HepG2 (cell line): ENCODE measurements at regions of chr20 and their contacts with region 1.

Region 1: DNA sequence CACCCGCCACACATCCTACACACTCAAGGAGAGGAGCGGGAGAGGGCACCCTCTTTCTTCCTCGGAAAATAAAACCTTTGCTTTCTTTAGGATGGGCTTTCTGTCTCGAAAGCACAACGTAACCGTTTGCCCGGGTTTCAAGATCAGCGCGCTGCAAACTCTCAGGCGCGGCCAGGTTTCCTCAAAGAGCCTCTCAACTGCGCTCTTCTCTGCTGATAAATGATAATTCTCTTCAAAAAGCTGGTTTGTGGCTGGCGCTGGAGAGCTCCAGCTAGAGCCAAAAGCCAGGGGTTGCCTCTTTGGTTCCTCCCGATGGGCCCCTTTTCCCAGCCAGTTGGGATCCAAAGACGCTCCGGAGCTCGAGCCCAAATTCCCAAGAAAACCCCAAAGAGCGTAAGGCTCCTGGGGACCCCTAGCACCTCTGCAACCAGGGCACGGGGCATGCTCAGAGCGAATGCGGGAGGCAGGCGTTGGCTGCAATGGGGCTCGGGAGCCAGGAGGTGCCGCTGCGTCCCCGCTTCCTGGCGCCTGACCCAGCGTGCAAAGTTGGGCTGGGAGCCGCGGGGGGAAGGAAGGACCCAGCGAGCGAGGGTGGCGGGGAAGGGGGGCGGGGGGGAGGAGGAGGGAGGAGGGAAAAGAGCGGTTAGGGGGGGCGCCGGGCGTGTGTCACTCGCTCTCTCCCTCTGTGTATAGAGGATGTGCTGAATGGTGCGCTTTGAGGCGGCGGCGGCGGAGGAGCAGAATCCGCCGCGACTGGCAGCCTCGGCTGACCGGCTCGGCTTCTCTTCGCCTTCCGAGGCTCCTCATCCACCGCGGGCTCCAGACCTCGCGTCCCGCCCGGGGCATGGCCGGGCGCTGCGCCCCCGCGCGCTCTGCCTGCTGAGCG is at the start of gene PLCB1:
- DNase-seq: peak; percentile 86
- ATAC-seq: peak; percentile 96
- H3K4me3 ChIP-seq: peak within 1 kb of the TSS; percentile 76 to 87 (median 84)
- H3K27ac ChIP-seq: peak within 1 kb of the TSS; percentile 38
- H3K4me1 ChIP-seq: peaks cover 72% of the 10 kb centered on the region
- H3K27me3 ChIP-seq: no peaks in the 10 kb centered on the region; a peak in 1 of 5 replicates
- CTCF ChIP-seq: peak; percentile 97
- EP300 ChIP-seq: 0 out of 4 replicates have a peak, but pooled peaks have one; percentile 8 to 13
- POLR2A ChIP-seq: 0 out of 4 replicates have a peak, but pooled peaks have one; percentile 31 to 40
- RAD21 ChIP-seq: peak; percentile 98
- total RNA-seq, gene PLCB1: 42.4 and 68.9 TPM in 2 replicates

Region 2: DNA sequence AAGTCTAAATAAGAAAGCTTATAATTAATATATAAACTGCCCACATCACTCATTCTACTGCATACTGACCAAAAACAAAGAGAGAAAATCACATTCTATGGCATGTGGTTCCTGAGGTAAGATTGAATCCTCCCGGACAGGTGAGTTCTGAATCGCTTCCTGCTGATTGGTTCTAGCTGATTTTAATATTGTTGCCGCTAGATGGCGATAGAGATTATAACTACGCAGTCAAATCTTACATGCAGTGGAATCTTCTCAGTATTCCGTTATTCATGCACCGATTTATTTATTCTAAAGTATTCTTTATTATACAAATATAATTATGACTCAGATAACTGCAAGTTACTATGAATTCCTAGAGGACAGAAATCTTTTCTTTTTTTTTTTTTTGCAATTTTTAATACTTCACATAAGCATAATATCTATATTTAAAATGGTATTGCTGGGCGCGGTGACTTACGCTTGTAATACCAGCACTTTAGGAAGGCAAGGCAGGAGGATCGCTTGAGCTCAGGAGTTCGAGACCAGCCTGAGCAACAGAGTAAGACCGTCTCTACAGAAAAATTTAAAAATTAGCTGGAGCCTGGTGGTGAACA is 88.1 kb before region 1 on chr20:
- CTCF ChIA-PET with region 1: no interaction called
- POLR2A ChIA-PET with region 1: no interaction called
- in situ Hi-C with region 1: no loop called
- intact Hi-C with region 1: loop called (anchors 5 kb)
- DNase-seq: peak; percentile 81
- ATAC-seq: peak; percentile 88
- H3K4me3 ChIP-seq: no peak overlapping the region
- H3K27ac ChIP-seq: no peak overlapping the region
- H3K4me1 ChIP-seq: peaks cover 26% of the 10 kb centered on the region; the same call in 1 of the 2 replicates
- H3K27me3 ChIP-seq: 0 out of 5 replicates have a peak, but pooled peaks cover 0 to 4% of the 10 kb centered on the region in 2 experiments
- CTCF ChIP-seq: peak; percentile 86
- EP300 ChIP-seq: no peak
- POLR2A ChIP-seq: no peak
- RAD21 ChIP-seq: peak; percentile 70

Region 3: DNA sequence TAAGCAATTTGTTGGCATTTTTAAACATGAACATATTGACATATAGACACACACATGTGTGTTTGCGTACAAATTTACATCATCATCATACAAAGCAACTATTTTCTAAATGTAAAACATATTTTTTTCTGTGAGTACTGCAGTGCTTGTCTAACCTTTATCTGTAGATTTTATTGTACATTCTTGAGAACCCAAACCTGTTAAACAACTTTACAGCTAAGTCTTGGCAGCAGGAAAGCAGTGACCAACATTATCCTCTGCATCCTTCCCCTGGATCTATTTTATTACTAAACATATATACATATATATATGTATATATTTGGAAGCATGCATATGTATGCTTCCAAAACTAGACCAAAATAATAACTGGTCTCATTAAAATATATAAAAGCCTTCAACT is 10.2 kb before region 1 on chr20:
- CTCF ChIA-PET with region 1: no interaction called
- POLR2A ChIA-PET with region 1: no interaction called
- in situ Hi-C with region 1: no loop called
- intact Hi-C with region 1: no loop called
- DNase-seq: no peak
- ATAC-seq: no peak
- H3K4me3 ChIP-seq: no peak overlapping the region
- H3K27ac ChIP-seq: no peak overlapping the region
- H3K4me1 ChIP-seq: peaks cover 43% of the 10 kb centered on the region
- H3K27me3 ChIP-seq: no peaks in the 10 kb centered on the region
- CTCF ChIP-seq: no peak
- EP300 ChIP-seq: no peak
- POLR2A ChIP-seq: no peak
- RAD21 ChIP-seq: no peak

Region 4: GRCh38 chr20:8156235-8157079 is 24.6 kb after region 1 on chr20:
- CTCF ChIA-PET with region 1: no interaction called
- POLR2A ChIA-PET with region 1: interaction called, 4 read pairs
- in situ Hi-C with region 1: no loop called
- intact Hi-C with region 1: loop called (anchors 2 kb)
- DNase-seq: peak; percentile 90
- ATAC-seq: peak; percentile 95
- H3K4me3 ChIP-seq: no peak overlapping the region; a peak in 1 of 6 replicates
- H3K27ac ChIP-seq: peak overlapping the region; percentile 59
- H3K4me1 ChIP-seq: peaks cover 54% of the 10 kb centered on the region
- H3K27me3 ChIP-seq: no peaks in the 10 kb centered on the region
- CTCF ChIP-seq: no peak
- EP300 ChIP-seq: peak; percentile 40 to 90; a peak in 2 of 4 replicates
- POLR2A ChIP-seq: no peak
- RAD21 ChIP-seq: no peak

Region 5: GRCh38 chr20:8299921-8300320 is 168.1 kb after region 1 on chr20:
- CTCF ChIA-PET with region 1: interaction called, 23 read pairs
- POLR2A ChIA-PET with region 1: no interaction called
- in situ Hi-C with region 1: loop called (anchors 5 kb)
- intact Hi-C with region 1: loop called (anchors 1 kb)
- DNase-seq: no peak
- ATAC-seq: no peak
- H3K4me3 ChIP-seq: no peak overlapping the region
- H3K27ac ChIP-seq: no peak overlapping the region
- H3K4me1 ChIP-seq: no peaks in the 10 kb centered on the region
- H3K27me3 ChIP-seq: no peaks in the 10 kb centered on the region
- CTCF ChIP-seq: no peak
- EP300 ChIP-seq: no peak
- POLR2A ChIP-seq: no peak
- RAD21 ChIP-seq: no peak

Region 6: DNA sequence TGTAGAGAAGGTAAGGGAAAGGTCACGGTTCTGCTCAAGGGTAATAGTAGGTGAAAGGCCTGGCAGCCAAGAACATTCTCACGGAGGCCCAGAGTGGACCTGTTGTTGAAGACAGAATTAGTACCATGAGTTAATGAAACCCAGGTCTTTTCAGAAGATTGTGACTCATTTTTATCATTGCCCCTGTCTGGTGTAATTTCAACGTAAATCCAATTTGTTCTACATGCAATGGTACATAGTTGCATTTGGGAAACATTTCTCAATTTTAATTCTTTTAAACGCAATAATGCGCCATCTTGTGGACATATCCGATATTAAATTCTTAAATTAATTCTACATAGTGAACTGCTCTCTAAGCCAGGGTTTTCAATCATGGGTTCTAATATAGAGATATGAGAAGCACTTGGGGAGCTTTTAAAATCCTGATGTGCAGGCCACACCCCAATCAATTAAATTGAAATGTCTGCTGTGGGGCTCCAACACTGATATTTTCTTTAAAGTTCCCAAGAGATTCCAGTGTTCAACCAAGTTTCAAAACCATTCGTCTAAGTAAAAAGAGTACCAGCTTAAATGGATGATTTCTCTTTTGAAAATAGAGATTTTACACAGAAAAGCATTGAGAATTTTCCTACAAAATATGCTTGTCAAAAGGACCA is 257.7 kb after region 1 on chr20:
- CTCF ChIA-PET with region 1: interaction called, 27 read pairs
- POLR2A ChIA-PET with region 1: interaction called, 3 read pairs
- in situ Hi-C with region 1: loop called (anchors 5 kb)
- intact Hi-C with region 1: loop called (anchors 1 kb)
- DNase-seq: peak; percentile 55
- ATAC-seq: peak; percentile 42
- H3K4me3 ChIP-seq: no peak overlapping the region
- H3K27ac ChIP-seq: no peak overlapping the region
- H3K4me1 ChIP-seq: peaks cover 49% of the 10 kb centered on the region
- H3K27me3 ChIP-seq: no peaks in the 10 kb centered on the region
- CTCF ChIP-seq: peak; percentile 64
- EP300 ChIP-seq: no peak
- POLR2A ChIP-seq: no peak
- RAD21 ChIP-seq: peak; percentile 65

Region 7: GRCh38 chr20:8535403-8536261 is 403.8 kb after region 1 on chr20:
- CTCF ChIA-PET with region 1: interaction called, 5 read pairs
- POLR2A ChIA-PET with region 1: no interaction called
- in situ Hi-C with region 1: loop called (anchors 10 kb)
- intact Hi-C with region 1: loop called (anchors 1 kb)
- DNase-seq: peak; percentile 23
- ATAC-seq: peak; percentile 87
- H3K4me3 ChIP-seq: no peak overlapping the region
- H3K27ac ChIP-seq: no peak overlapping the region
- H3K4me1 ChIP-seq: no peaks in the 10 kb centered on the region
- H3K27me3 ChIP-seq: no peaks in the 10 kb centered on the region
- CTCF ChIP-seq: peak; percentile 57
- EP300 ChIP-seq: no peak
- POLR2A ChIP-seq: no peak
- RAD21 ChIP-seq: no peak